ENCODE measurements at regions of chr16 and their contacts with region 1.

Region 1: GRCh38 chr16:19067349-19068236 is at the start of gene COQ7:
- DNase-seq: peak; percentile 98
- ATAC-seq: peak; percentile 89
- H3K4me3 ChIP-seq: peak within 1 kb of the TSS; percentile 95
- H3K27ac ChIP-seq: peak within 1 kb of the TSS; percentile 98
- H3K4me1 ChIP-seq: peaks cover 6% of the 10 kb centered on the region; the same call in 1 of the 2 replicates
- H3K27me3 ChIP-seq: no peaks in the 10 kb centered on the region
- CTCF ChIP-seq: no peak
- total RNA-seq, gene COQ7: 12.2 and 25.0 TPM in 2 replicates

Region 2: DNA sequence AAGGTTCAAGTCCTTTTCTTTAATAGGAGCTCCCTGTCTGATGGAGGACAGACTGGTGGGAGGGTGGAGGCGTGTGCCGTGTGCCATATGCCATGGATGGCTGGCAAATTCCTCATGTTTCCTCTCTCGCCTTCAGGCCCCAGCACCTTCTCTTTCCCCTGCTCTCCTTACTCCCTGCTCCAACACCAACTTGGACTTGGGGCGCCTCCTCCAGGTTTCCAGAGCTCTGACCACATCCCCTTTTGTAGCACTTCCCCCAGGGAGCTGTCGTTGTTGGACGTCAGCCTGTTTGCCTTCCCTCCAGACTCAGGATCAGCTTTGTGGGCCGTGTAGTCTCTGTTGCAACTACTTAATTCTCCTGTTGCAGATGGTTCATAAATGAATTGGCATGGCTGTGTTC is 53.1 kb before region 1 on chr16:
- CTCF ChIA-PET with region 1: no interaction called
- POLR2A ChIA-PET with region 1: no interaction called
- intact Hi-C with region 1: loop called (anchors 5 kb)
- DNase-seq: no peak
- ATAC-seq: no peak
- H3K4me3 ChIP-seq: no peak overlapping the region
- H3K27ac ChIP-seq: no peak overlapping the region
- H3K4me1 ChIP-seq: no peaks in the 10 kb centered on the region
- H3K27me3 ChIP-seq: no peaks in the 10 kb centered on the region
- CTCF ChIP-seq: 0 out of 2 replicates have a peak, but pooled peaks have one; percentile 20

Measured in PC-3 (cell line).